Panc1 (cell line): ENCODE measurements at regions of chr9 and their contacts with region 1.

Region 1: DNA sequence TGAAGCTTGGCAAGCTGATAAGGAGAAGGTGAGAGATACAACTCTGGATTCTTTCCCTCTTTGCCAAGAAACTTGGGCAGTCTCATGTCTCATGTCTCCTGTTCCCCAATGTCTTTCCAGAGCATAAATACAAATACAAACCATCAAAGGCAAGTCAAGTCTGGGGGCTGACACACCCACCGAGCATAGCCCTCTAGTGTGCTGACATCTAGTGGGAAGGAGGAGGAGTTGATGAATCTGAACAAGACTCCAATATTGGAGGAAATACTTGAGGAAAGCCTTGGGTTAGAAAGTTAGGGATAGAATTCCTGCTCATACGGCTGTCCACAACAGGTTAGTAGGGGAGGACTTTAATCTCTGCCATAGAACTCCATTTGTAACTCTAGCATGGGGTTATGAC is 8.6 kb downstream of the MLANA start:
- DNase-seq: no peak
- ATAC-seq: no peak
- H3K4me3 ChIP-seq: no peak overlapping the region
- H3K27ac ChIP-seq: no peak overlapping the region
- H3K4me1 ChIP-seq: no peaks in the 10 kb centered on the region
- H3K27me3 ChIP-seq: no peaks in the 10 kb centered on the region
- CTCF ChIP-seq: no peak

Region 2: GRCh38 chr9:5817869-5818268 is 81.4 kb before region 1 on chr9:
- CTCF ChIA-PET with region 1: no interaction called
- POLR2A ChIA-PET with region 1: no interaction called
- in situ Hi-C with region 1: no loop called
- intact Hi-C with region 1: no loop called
- DNase-seq: no peak
- ATAC-seq: no peak
- H3K4me3 ChIP-seq: no peak overlapping the region
- H3K27ac ChIP-seq: no peak overlapping the region
- H3K4me1 ChIP-seq: no peaks in the 10 kb centered on the region
- H3K27me3 ChIP-seq: no peaks in the 10 kb centered on the region
- CTCF ChIP-seq: no peak

Region 3: GRCh38 chr9:5958273-5958672 is 59.0 kb after region 1 on chr9:
- CTCF ChIA-PET with region 1: no interaction called
- POLR2A ChIA-PET with region 1: no interaction called
- in situ Hi-C with region 1: no loop called
- intact Hi-C with region 1: no loop called
- DNase-seq: no peak
- ATAC-seq: no peak
- H3K4me3 ChIP-seq: no peak overlapping the region
- H3K27ac ChIP-seq: no peak overlapping the region
- H3K4me1 ChIP-seq: no peaks in the 10 kb centered on the region
- H3K27me3 ChIP-seq: no peaks in the 10 kb centered on the region
- CTCF ChIP-seq: no peak

Region 4: DNA sequence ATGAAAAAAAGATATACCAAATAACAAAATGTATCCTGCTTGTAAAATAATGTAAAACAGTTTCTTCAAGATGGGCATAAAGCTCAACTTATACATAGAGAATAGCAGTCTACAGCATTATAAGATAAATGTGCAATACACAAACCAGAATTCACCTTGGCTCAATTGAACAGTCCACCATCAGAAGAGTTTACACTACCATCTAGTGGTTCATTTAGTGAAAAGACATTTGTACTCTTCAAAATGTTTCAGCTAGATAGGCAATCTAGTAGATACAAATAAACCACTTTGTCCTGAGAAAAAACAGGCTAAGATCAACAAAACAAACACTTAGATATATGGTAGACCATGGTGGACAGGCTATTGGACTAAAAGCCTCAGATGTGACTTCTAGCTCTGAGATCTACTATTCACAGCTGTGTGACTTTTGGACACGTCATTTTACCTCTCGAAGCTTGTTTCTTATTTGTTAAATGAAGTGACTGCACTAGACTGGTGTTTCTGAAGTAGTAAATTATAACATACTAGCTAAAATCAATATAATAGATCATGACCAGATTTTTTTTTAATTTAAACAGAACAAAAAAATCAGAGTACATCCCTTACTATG is 406.8 kb after region 1 on chr9:
- CTCF ChIA-PET with region 1: no interaction called
- POLR2A ChIA-PET with region 1: no interaction called
- in situ Hi-C with region 1: no loop called
- intact Hi-C with region 1: loop called (anchors 5 kb)
- DNase-seq: peak; percentile 12
- ATAC-seq: no peak
- H3K4me3 ChIP-seq: no peak overlapping the region
- H3K27ac ChIP-seq: no peak overlapping the region
- H3K4me1 ChIP-seq: no peaks in the 10 kb centered on the region
- H3K27me3 ChIP-seq: no peaks in the 10 kb centered on the region
- CTCF ChIP-seq: peak; percentile 30; the same call in 1 of the 2 replicates